ENCODE measurements at regions of chr3 and their contacts with region 1.

Region 1: DNA sequence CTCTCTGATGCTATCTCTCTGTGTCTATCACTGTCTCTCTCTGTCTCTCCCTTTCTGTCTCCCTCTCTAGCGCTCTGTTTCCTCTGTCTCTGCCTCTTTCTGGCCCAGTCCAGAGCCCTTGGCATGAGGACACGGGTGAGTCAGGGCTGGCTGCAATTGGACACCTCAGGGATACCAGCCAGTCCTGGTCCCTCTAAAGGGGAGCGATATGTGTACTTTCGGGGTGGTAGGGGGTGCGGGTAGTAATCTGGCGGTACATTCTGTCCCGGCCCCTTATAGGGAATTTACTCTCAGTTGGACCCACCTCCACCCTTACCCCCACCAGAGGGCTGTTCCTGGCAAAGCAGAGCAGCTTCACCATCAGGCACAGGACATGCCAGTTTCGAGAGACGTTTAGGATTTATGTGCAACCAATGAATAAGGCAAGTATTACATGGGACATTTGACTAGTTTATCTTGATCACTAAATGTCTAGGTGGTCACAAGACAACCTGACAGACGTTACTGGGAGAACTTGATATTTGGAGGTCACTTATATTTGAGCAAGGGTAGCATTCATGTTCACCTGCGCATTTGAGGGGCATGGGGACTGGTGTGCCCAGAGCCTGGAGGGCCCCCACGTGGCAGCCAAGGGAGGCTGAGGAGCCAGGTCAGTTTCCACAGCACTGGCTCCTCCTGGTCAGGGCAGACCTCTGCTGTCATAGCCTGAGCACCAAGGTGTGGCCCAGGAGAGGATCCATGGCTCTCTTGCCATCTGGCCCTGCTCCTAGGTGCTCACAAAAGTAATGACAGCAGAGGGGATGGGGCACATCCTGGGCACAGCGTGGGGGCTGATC is 256.1 kb downstream of the PLCL2 start:
- DNase-seq: no peak
- H3K4me3 Mint-ChIP-seq: no peak overlapping the region
- H3K27ac Mint-ChIP-seq: no peak overlapping the region
- H3K4me1 Mint-ChIP-seq: peaks cover 13% of the 10 kb centered on the region
- H3K27me3 Mint-ChIP-seq: no peaks in the 10 kb centered on the region

Region 2: GRCh38 chr3:17179381-17180210 is 38.7 kb after region 1 on chr3:
- CTCF ChIA-PET with region 1: no interaction called
- POLR2A ChIA-PET with region 1: no interaction called
- intact Hi-C with region 1: loop called (anchors 5 kb)
- DNase-seq: no peak
- H3K4me3 Mint-ChIP-seq: no peak overlapping the region
- H3K27ac Mint-ChIP-seq: no peak overlapping the region
- H3K4me1 Mint-ChIP-seq: peaks cover 31% of the 10 kb centered on the region
- H3K27me3 Mint-ChIP-seq: no peaks in the 10 kb centered on the region

Measured in activated CD4-positive, alpha-beta memory T cell treated with anti-CD3 and anti-CD28 coated beads for 36 hours (primary cell).